ENCODE measurements at regions of chr7 and their contacts with region 1.

Region 1: GRCh38 chr7:107879400-107880035 is 11.5 kb upstream of the DLD start:
- DNase-seq: peak; percentile 86
- H3K4me3 ChIP-seq: no peak overlapping the region
- H3K27ac ChIP-seq: no peak overlapping the region
- H3K4me1 ChIP-seq: peaks cover 2% of the 10 kb centered on the region
- H3K27me3 ChIP-seq: peaks cover 13 to 15% of the 10 kb centered on the region in 2 experiments
- CTCF ChIP-seq: peak; percentile 64 to 65
- POLR2A ChIP-seq: no peak

Region 2: GRCh38 chr7:106793015-106793975 is 1086.2 kb before region 1 on chr7:
- CTCF ChIA-PET with region 1: no interaction called
- POLR2A ChIA-PET with region 1: no interaction called
- dilution Hi-C with region 1: no loop called
- intact Hi-C with region 1: loop called (anchors 2 kb)
- DNase-seq: no peak
- H3K4me3 ChIP-seq: no peak overlapping the region
- H3K27ac ChIP-seq: no peak overlapping the region
- H3K4me1 ChIP-seq: no peaks in the 10 kb centered on the region
- H3K27me3 ChIP-seq: no peaks in the 10 kb centered on the region
- CTCF ChIP-seq: peak; percentile 24 to 36
- POLR2A ChIP-seq: no peak

Region 3: DNA sequence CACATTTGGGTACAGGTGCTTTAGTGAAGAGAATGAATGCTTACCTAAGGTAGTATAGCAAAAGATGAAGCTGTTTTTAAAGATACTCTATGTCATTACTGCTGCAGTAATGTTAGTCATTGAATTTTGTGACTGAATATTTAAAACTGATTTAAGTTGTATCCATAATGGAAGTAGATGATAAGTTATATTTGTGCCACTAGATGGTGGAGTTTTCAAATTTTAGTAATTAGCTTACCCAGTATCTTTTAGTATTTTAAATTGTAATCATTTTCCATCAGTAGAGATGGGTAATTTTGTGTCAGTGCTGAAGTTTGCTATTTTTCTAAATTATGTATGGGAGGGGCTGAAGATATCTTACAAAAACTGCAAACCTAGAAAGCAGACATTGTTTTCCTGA is 685.5 kb before region 1 on chr7:
- CTCF ChIA-PET with region 1: interaction called, 31 read pairs
- POLR2A ChIA-PET with region 1: no interaction called
- dilution Hi-C with region 1: no loop called
- intact Hi-C with region 1: no loop called
- DNase-seq: no peak
- H3K4me3 ChIP-seq: no peak overlapping the region
- H3K27ac ChIP-seq: no peak overlapping the region
- H3K4me1 ChIP-seq: peaks cover 4% of the 10 kb centered on the region
- H3K27me3 ChIP-seq: no peaks in the 10 kb centered on the region
- CTCF ChIP-seq: no peak
- POLR2A ChIP-seq: no peak

Region 4: DNA sequence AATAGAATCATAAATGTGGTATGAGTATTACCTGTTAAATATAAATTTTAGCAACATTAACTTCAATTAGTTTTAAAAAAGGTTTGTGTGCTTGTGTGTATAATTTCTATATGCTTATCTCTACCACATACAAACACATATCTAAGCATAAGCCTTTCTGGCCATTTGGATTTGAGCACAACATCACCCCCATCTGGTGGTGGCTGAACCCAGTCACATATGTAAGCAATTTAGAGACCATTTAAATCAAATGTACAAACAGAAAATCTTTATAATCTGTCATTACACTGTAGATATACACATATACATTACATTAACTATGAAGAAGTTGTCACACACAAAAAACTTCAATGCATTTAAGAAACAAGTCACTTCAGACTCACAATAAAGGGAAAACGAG is 377.9 kb before region 1 on chr7:
- CTCF ChIA-PET with region 1: interaction called, 10 read pairs
- POLR2A ChIA-PET with region 1: no interaction called
- dilution Hi-C with region 1: no loop called
- intact Hi-C with region 1: no loop called
- DNase-seq: peak; percentile 64
- H3K4me3 ChIP-seq: no peak overlapping the region
- H3K27ac ChIP-seq: no peak overlapping the region
- H3K4me1 ChIP-seq: peaks cover 2% of the 10 kb centered on the region
- H3K27me3 ChIP-seq: no peaks in the 10 kb centered on the region
- CTCF ChIP-seq: peak; percentile 36
- POLR2A ChIP-seq: no peak

Region 5: GRCh38 chr7:107754642-107755041 is 124.9 kb before region 1 on chr7:
- CTCF ChIA-PET with region 1: interaction called, 14 read pairs
- POLR2A ChIA-PET with region 1: no interaction called
- dilution Hi-C with region 1: no loop called
- intact Hi-C with region 1: no loop called
- DNase-seq: no peak
- H3K4me3 ChIP-seq: no peak overlapping the region
- H3K27ac ChIP-seq: no peak overlapping the region
- H3K4me1 ChIP-seq: no peaks in the 10 kb centered on the region
- H3K27me3 ChIP-seq: no peaks in the 10 kb centered on the region
- CTCF ChIP-seq: no peak
- POLR2A ChIP-seq: no peak

Region 6: DNA sequence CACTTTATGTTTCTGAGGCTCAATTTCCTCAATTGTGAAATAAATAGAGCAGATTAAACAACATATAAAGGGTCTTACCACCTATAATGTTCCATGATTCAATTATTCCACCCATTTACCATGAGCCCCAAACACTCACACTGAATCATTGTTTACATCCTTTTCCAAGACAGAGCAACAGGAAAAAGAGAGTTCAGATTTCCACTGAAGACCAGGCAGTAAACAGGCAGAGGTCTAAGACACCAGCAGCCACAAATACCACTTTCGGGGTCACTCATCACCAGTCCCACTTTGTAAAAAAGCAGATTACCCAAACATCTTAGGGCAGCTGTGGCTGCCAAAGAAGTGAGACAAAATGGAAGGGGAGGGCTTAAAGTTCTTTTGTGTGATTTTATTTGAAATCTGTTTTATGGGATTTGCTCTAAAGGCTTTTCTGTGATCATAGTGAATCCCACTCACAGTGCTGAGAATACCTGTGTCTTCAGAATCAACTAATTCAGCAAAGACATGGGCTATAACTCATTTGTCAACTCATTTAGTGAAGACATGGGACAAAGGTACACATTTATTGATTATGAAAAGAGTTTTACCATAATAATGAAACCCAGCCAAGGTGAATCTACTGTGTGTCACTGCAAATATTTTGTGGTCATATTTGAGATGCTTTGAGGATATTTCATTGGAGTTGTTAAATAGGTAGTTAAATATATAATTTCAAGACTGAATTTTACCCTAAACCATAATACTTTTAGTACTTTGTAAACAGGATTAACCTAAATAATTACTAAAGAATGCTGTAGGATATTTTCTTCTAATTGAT is 13.4 kb before region 1 on chr7:
- CTCF ChIA-PET with region 1: interaction called, 26 read pairs
- POLR2A ChIA-PET with region 1: no interaction called
- dilution Hi-C with region 1: no loop called
- intact Hi-C with region 1: no loop called
- DNase-seq: peak; percentile 78
- H3K4me3 ChIP-seq: no peak overlapping the region
- H3K27ac ChIP-seq: no peak overlapping the region
- H3K4me1 ChIP-seq: peaks cover 5% of the 10 kb centered on the region
- H3K27me3 ChIP-seq: peaks cover 0 to 2% of the 10 kb centered on the region in 2 experiments
- CTCF ChIP-seq: no peak
- POLR2A ChIP-seq: no peak

Measured in endothelial cell of umbilical vein (primary cell).